CD8-positive, alpha-beta T cell (primary cell): ENCODE measurements at regions of chr19 and their contacts with region 1.

Region 1: DNA sequence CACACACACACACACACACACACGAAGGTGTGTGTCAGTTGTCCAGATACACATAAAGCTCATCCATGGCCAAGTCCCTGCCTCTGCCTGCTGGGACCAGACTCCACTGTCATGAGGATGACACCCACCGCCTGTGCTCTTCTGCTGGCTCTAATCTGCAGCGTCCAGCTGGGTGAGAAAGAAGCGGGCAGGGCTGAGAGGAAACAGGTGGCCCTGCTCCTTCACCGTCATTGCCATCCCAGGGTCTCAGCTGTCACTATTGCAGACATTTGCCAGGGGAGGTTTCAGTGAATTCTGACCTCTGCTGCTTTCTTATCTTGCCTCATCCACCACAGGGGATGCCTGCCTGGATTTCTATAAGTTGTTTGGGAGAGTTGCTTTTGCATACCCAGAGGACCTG is 31.4 kb downstream of the SCGB2B2 start:
- DNase-seq: no peak
- ATAC-seq: no peak
- H3K4me3 ChIP-seq: no peak overlapping the region
- H3K4me3 Mint-ChIP-seq: no peak overlapping the region
- H3K27ac ChIP-seq: no peak overlapping the region
- H3K27ac Mint-ChIP-seq: no peak overlapping the region
- H3K4me1 ChIP-seq: no peaks in the 10 kb centered on the region
- H3K4me1 Mint-ChIP-seq: no peaks in the 10 kb centered on the region
- H3K27me3 ChIP-seq: no peaks in the 10 kb centered on the region
- H3K27me3 Mint-ChIP-seq: peaks cover 2% of the 10 kb centered on the region
- CTCF ChIP-seq: no peak

Region 2: GRCh38 chr19:34692549-34692948 is 47.0 kb after region 1 on chr19:
- CTCF ChIA-PET with region 1: no interaction called
- POLR2A ChIA-PET with region 1: no interaction called
- intact Hi-C with region 1: loop called in 1 of 2 experiments (anchors 5 kb)
- DNase-seq: no peak
- ATAC-seq: no peak
- H3K4me3 ChIP-seq: no peak overlapping the region
- H3K4me3 Mint-ChIP-seq: no peak overlapping the region
- H3K27ac ChIP-seq: no peak overlapping the region
- H3K27ac Mint-ChIP-seq: no peak overlapping the region
- H3K4me1 ChIP-seq: no peaks in the 10 kb centered on the region
- H3K4me1 Mint-ChIP-seq: no peaks in the 10 kb centered on the region
- H3K27me3 ChIP-seq: no peaks in the 10 kb centered on the region
- H3K27me3 Mint-ChIP-seq: peaks cover 49% of the 10 kb centered on the region
- CTCF ChIP-seq: no peak

Region 3: DNA sequence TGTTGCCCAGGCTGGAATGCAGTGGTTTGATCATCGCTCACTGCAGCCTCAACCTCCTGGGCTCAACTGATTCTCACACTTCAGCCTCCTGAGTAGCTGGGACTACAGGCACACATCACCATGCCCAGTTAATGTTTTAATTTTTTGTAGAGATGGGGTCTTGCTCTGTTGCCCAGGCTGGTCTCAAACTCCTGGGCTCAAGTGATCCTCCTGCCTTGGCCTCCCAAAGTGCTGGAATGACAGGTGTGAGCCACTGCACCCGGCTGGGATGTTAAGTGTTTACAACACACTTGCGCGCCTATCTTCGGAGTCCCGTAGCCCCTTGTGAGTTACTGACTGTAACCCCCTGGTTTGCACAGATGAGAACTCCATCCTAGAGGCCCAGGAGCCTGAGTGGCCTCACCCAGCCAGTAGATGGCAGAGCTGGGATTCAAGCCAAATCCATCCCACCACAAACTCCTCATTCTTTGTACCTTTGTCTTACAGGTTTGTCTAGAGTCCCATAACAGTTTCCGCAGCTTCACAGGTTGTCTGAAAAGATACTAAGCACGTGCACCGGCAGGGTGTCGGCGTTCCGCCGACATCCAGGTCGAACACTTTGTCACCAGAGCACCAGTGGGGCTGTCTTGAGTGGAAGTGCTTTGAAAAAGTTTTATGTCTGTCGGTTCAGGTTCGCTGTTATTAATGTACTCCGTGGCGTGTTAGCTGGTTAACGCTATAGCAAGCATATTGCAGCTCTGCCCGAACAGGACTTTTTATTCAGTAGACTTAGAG is 661.1 kb after region 1 on chr19:
- CTCF ChIA-PET with region 1: no interaction called
- POLR2A ChIA-PET with region 1: no interaction called
- intact Hi-C with region 1: no loop called
- DNase-seq: no peak
- ATAC-seq: no peak
- H3K4me3 ChIP-seq: no peak overlapping the region
- H3K4me3 Mint-ChIP-seq: no peak overlapping the region
- H3K27ac ChIP-seq: no peak overlapping the region
- H3K27ac Mint-ChIP-seq: no peak overlapping the region
- H3K4me1 ChIP-seq: no peaks in the 10 kb centered on the region
- H3K4me1 Mint-ChIP-seq: peaks cover 2% of the 10 kb centered on the region
- H3K27me3 ChIP-seq: no peaks in the 10 kb centered on the region
- H3K27me3 Mint-ChIP-seq: no peaks in the 10 kb centered on the region
- CTCF ChIP-seq: no peak